Caco-2 (cell line): ENCODE measurements at regions of chr3 and their contacts with region 1.

Region 1: GRCh38 chr3:189967254-189967865 is 153.3 kb downstream of the P3H2 start:
- DNase-seq: peak in 1 of 2 experiments; percentile 64
- H3K4me3 ChIP-seq: no peak overlapping the region
- H3K4me3 Mint-ChIP-seq: no peak overlapping the region
- H3K27ac Mint-ChIP-seq: no peak overlapping the region
- H3K4me1 ChIP-seq: no peaks in the 10 kb centered on the region
- H3K4me1 Mint-ChIP-seq: no peaks in the 10 kb centered on the region
- H3K27me3 ChIP-seq: no peaks in the 10 kb centered on the region
- H3K27me3 Mint-ChIP-seq: no peaks in the 10 kb centered on the region
- CTCF ChIP-seq: peak; percentile 75 to 80

Region 2: DNA sequence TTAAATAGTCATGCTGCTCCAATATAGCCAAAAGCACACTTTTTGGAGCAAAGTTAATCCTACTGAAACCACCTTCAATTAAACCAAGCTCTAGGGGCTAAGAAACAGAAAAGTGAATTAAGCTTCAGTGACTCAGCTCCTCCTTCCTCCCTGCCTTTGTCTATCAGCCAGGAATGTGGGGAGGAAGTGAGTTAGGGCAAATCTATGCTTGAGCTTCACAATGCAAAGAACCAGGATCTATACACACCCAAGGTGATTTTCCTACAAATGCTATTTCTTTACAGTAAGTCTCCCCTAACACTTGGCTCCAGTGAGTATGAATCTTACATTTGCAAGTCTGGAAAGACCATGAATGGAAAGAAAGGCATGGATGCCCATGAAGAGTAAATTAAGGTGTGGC is 58.7 kb before region 1 on chr3:
- CTCF ChIA-PET with region 1: no interaction called
- POLR2A ChIA-PET with region 1: no interaction called
- intact Hi-C with region 1: no loop called
- DNase-seq: no peak
- H3K4me3 ChIP-seq: no peak overlapping the region
- H3K4me3 Mint-ChIP-seq: no peak overlapping the region
- H3K27ac Mint-ChIP-seq: no peak overlapping the region
- H3K4me1 ChIP-seq: no peaks in the 10 kb centered on the region
- H3K4me1 Mint-ChIP-seq: no peaks in the 10 kb centered on the region
- H3K27me3 ChIP-seq: no peaks in the 10 kb centered on the region
- H3K27me3 Mint-ChIP-seq: peaks cover 3% of the 10 kb centered on the region
- CTCF ChIP-seq: no peak

Region 3: GRCh38 chr3:190012314-190012782 is 45.0 kb after region 1 on chr3:
- CTCF ChIA-PET with region 1: no interaction called
- POLR2A ChIA-PET with region 1: no interaction called
- intact Hi-C with region 1: loop called (anchors 5 kb)
- DNase-seq: peak in 1 of 2 experiments; percentile 53
- H3K4me3 ChIP-seq: no peak overlapping the region
- H3K4me3 Mint-ChIP-seq: peak overlapping the region; percentile 43
- H3K27ac Mint-ChIP-seq: peak overlapping the region; percentile 78
- H3K4me1 ChIP-seq: peaks cover 55% of the 10 kb centered on the region
- H3K4me1 Mint-ChIP-seq: peaks cover 53% of the 10 kb centered on the region
- H3K27me3 ChIP-seq: no peaks in the 10 kb centered on the region
- H3K27me3 Mint-ChIP-seq: no peaks in the 10 kb centered on the region
- CTCF ChIP-seq: no peak

Region 4: GRCh38 chr3:190032924-190033323 is 65.6 kb after region 1 on chr3:
- CTCF ChIA-PET with region 1: interaction called, 3 read pairs
- POLR2A ChIA-PET with region 1: no interaction called
- intact Hi-C with region 1: loop called (anchors 2 kb)
- DNase-seq: peak; percentile 20 to 38
- H3K4me3 ChIP-seq: no peak overlapping the region
- H3K4me3 Mint-ChIP-seq: no peak overlapping the region
- H3K27ac Mint-ChIP-seq: no peak overlapping the region
- H3K4me1 ChIP-seq: peaks cover 5% of the 10 kb centered on the region
- H3K4me1 Mint-ChIP-seq: peaks cover 19% of the 10 kb centered on the region
- H3K27me3 ChIP-seq: no peaks in the 10 kb centered on the region
- H3K27me3 Mint-ChIP-seq: no peaks in the 10 kb centered on the region
- CTCF ChIP-seq: no peak

Region 5: DNA sequence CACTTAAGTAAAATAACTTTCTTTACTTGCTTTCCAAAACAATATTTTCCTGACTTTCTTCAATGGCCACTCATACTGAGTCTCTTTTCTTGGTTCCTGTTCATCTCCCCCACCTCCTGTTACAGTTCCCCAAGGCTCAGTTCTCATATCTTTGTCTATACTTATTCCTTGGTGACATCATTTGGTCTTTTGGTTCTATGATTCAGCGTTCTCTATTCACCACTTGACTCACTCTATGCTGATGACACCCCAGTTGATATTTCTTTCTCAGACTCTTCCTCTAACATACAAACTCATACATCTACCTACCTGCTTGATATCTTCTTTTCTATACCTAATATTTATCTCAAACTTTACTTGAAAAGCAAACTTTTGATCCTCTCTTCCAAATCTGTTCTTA is 238.4 kb after region 1 on chr3:
- CTCF ChIA-PET with region 1: interaction called, 3 read pairs
- POLR2A ChIA-PET with region 1: no interaction called
- intact Hi-C with region 1: loop called (anchors 1 kb)
- DNase-seq: no peak
- H3K4me3 ChIP-seq: no peak overlapping the region
- H3K4me3 Mint-ChIP-seq: no peak overlapping the region
- H3K27ac Mint-ChIP-seq: no peak overlapping the region
- H3K4me1 ChIP-seq: peaks cover 4% of the 10 kb centered on the region; the same call in 1 of the 2 replicates
- H3K4me1 Mint-ChIP-seq: peaks cover 6% of the 10 kb centered on the region
- H3K27me3 ChIP-seq: no peaks in the 10 kb centered on the region
- H3K27me3 Mint-ChIP-seq: no peaks in the 10 kb centered on the region
- CTCF ChIP-seq: no peak

Region 6: GRCh38 chr3:190424478-190425439 is 457.4 kb after region 1 on chr3:
- CTCF ChIA-PET with region 1: no interaction called
- POLR2A ChIA-PET with region 1: no interaction called
- intact Hi-C with region 1: loop called (anchors 2 kb)
- DNase-seq: peak; percentile 75 to 76
- H3K4me3 ChIP-seq: no peak overlapping the region
- H3K4me3 Mint-ChIP-seq: no peak overlapping the region
- H3K27ac Mint-ChIP-seq: no peak overlapping the region
- H3K4me1 ChIP-seq: no peaks in the 10 kb centered on the region
- H3K4me1 Mint-ChIP-seq: no peaks in the 10 kb centered on the region
- H3K27me3 ChIP-seq: no peaks in the 10 kb centered on the region
- H3K27me3 Mint-ChIP-seq: peaks cover 2% of the 10 kb centered on the region
- CTCF ChIP-seq: peak; percentile 57 to 66